Activated CD4-positive, alpha-beta T cell treated with anti-CD3 and anti-CD28 coated beads, Interleukin-2, amount 10 ng/mL, durations not matched to agents 24 days and 14 days (primary cell): ENCODE measurements at regions of chr17 and their contacts with region 1.

Region 1: GRCh38 chr17:75784473-75785015 is at the start of gene UNK:
- DNase-seq: peak; percentile 98
- H3K4me3 Mint-ChIP-seq: peak within 1 kb of the TSS; percentile 93
- H3K27ac Mint-ChIP-seq: peak within 1 kb of the TSS; percentile 100
- H3K4me1 Mint-ChIP-seq: peaks cover 44% of the 10 kb centered on the region
- H3K27me3 Mint-ChIP-seq: peaks cover 3% of the 10 kb centered on the region
- total RNA-seq, gene UNK: 28.9 and 30.0 TPM in 2 replicates

Region 2: DNA sequence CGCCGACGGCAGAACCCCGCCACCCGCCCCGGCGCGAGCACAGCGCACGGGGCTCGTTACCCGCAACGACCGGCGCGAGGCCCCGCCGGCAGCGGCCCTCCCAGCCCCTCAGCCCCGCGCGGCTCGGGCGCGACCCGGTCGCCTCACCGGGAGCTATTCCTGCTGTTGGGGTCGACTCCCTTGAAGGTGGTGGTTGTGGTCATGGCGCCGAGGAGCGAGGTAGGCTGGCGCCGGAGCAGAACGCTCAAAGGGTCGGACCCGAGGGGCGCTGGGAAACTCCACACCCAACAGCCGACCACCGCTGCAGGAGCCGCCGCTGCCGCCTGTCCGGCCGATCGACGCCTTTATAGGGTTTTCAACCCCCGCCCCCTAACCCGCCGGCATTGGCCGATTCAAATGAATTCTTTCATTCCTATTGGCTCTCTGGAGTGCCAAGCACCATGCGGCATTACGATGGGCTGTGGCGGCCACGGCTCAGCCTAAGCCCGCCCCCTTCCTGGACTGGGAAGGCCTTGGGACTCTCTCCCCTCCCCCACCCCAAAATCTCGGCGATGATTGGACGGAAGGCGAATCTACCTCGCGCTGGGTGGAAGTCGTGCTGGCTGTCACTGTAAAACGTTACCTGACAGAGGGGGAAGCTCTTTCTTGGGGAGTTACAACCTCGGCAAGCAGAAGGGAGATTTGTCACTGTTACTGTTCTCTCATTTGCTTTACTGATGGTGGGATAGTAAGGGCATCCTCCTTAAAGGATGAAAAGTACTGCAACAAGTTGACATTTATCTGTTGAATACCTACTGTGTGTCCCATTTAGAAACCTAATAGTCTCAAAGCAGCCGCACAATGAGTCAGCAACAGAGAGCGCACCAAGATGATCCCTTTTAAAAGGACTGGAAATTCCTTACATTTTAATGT is 630.1 kb before region 1 on chr17 and contains the start of gene JPT1:
- intact Hi-C with region 1: loop called (anchors 5 kb)
- DNase-seq: peak; percentile 99
- H3K4me3 Mint-ChIP-seq: peak within 1 kb of the TSS; percentile 98
- H3K27ac Mint-ChIP-seq: peak within 1 kb of the TSS; percentile 96
- H3K4me1 Mint-ChIP-seq: peaks cover 30% of the 10 kb centered on the region
- H3K27me3 Mint-ChIP-seq: no peaks in the 10 kb centered on the region
- total RNA-seq, gene JPT1: 271 and 292 TPM in 2 replicates

Region 3: DNA sequence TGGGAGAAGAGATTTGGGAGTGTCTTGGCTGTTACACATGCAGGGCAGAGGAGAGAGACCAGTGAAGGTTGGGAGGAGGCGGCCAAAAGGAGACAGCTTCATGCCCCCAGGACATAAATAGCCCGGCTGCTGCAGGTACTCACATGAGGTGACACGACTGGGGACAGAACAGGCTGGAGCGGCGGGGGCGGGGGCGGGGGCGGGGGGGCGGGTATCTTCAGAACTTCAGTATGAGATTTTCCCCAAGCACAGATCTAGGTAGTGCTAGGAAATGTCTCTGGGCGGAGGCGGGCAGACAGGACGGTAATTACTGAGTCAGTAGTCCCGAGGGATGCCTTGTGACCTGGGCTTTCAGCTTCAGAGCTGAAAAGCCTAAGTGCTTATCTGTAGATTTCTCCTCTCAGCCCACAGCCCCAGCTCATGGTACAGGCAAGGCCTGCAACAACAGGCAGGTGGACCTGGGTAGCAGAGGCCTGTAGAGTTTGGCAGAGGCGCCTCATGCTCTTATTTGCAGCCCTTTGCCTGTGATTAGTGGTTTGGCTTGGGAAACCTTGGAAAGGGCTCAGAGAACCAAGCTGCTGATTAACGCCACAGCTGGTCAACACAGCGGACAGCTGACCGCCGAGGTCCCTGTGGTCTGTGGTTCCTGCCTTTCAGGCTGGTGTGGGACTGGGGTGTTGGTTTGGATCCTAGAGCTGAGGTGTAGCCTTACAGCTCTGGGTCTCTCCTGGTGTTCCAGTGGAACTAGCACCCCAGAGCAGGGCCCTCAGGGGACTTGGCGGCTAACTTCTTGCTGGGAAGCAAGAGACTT is 24.6 kb after region 1 on chr17:
- intact Hi-C with region 1: no loop called
- DNase-seq: no peak
- H3K4me3 Mint-ChIP-seq: no peak overlapping the region
- H3K27ac Mint-ChIP-seq: no peak overlapping the region
- H3K4me1 Mint-ChIP-seq: peaks cover 8% of the 10 kb centered on the region
- H3K27me3 Mint-ChIP-seq: no peaks in the 10 kb centered on the region

Region 4: GRCh38 chr17:75845049-75845860 is 60.7 kb after region 1 on chr17:
- intact Hi-C with region 1: loop called (anchors 1 kb)
- DNase-seq: peak; percentile 88
- H3K4me3 Mint-ChIP-seq: peak overlapping the region; percentile 89
- H3K27ac Mint-ChIP-seq: peak overlapping the region; percentile 79
- H3K4me1 Mint-ChIP-seq: peaks cover 19% of the 10 kb centered on the region
- H3K27me3 Mint-ChIP-seq: no peaks in the 10 kb centered on the region

Region 5: DNA sequence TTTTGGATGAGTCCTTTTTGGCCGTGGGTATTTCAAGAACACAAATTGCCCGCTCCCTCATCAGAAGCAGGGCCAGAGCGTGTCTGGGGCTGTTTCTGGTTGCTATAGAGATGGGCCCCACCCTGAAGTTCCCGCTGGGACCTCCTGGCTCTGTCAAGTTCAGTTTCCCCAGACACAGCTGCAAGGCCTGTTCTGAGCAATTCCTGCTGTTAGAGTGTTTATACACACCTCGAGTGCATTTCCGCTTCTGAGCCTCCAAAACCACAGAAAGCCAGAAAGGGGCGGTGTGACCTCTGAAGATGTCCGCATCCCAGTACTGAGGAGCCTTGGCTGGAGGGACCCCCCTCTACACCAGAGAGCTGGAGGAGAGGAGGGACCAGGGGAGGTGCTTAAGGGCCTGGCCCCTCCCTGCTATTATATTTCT is 79.9 kb after region 1 on chr17:
- intact Hi-C with region 1: no loop called
- DNase-seq: peak; percentile 90
- H3K4me3 Mint-ChIP-seq: peak overlapping the region; percentile 60
- H3K27ac Mint-ChIP-seq: peak overlapping the region; percentile 86
- H3K4me1 Mint-ChIP-seq: peaks cover 28% of the 10 kb centered on the region
- H3K27me3 Mint-ChIP-seq: no peaks in the 10 kb centered on the region

Region 6: GRCh38 chr17:75875940-75876189 is 91.3 kb after region 1 on chr17:
- intact Hi-C with region 1: no loop called
- DNase-seq: no peak
- H3K4me3 Mint-ChIP-seq: peak overlapping the region; percentile 90
- H3K27ac Mint-ChIP-seq: peak overlapping the region; percentile 96
- H3K4me1 Mint-ChIP-seq: peaks cover 35% of the 10 kb centered on the region
- H3K27me3 Mint-ChIP-seq: peaks cover 6% of the 10 kb centered on the region

Region 7: GRCh38 chr17:76182016-76182764 is 397.6 kb after region 1 on chr17:
- intact Hi-C with region 1: loop called (anchors 10 kb)
- DNase-seq: peak; percentile 98
- H3K4me3 Mint-ChIP-seq: peak overlapping the region; percentile 66
- H3K27ac Mint-ChIP-seq: peak overlapping the region; percentile 92
- H3K4me1 Mint-ChIP-seq: peaks cover 53% of the 10 kb centered on the region
- H3K27me3 Mint-ChIP-seq: no peaks in the 10 kb centered on the region

Region 8: DNA sequence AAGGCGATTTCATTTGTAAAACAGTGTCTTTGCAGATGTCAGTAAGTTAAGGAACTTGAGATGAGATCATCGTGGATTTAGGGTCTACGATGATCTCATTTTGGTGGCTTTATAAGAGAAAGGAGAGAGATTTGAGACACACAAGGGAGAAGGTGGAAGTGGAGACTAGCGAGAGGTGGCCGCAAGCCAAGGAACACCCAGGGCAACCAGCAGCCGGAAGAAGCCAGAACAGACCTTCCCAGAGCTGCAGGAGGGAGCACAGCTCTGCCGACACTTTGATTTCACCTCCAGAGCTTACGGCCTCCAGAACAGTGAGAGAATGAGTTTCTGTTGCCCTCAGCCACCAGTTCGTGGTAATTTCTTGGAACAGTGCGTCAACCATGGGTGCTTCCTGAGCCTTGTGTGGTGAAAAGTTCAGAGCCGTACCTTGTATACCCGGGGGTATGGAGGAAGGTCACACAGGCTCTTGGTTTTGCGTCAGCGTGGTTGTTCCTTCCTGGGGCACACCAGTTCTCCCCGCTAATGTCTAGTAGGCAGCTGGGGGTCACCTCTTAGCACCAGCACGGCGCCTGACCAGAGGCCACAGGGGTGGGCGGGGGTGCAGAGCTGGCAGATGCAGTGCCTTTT is 1343.3 kb after region 1 on chr17:
- intact Hi-C with region 1: loop called (anchors 10 kb)
- DNase-seq: peak; percentile 94
- H3K4me3 Mint-ChIP-seq: peak overlapping the region; percentile 73
- H3K27ac Mint-ChIP-seq: peak overlapping the region; percentile 93
- H3K4me1 Mint-ChIP-seq: peaks cover 43% of the 10 kb centered on the region
- H3K27me3 Mint-ChIP-seq: no peaks in the 10 kb centered on the region